ENCODE measurements at regions of chr12 and their contacts with region 1.

Region 1: DNA sequence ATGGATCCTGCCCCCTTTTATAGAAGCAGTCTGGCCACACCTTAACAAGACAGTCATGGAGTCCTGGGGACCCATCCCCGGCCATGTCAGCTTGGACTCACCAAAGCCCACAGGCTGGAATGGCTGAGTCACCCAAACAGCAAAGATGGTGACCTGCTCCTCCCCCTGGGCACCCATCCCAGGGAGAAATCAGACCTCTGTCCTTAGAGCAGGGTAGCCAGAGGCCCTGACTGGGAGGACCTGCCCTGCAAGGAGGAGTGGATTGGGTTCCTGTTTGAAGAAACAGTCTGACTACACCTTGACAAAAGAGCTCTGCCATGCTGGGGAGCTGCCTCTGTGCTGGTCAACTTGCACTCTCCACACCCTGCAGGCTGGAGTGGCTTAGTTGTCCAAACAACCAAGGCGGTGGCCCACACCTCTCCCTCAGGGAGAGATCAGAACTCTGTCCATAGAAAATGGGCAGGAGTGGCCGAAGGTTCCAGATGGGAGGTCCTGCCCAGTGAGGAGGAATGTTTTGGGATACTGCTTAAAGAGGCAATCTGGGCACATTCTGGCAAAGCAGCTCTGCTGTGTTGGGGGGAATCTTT is 16.6 kb downstream of the MGP start:
- DNase-seq: no peak
- ATAC-seq: no peak
- H3K4me3 ChIP-seq: no peak overlapping the region
- H3K4me3 Mint-ChIP-seq: no peak overlapping the region
- H3K27ac ChIP-seq: no peak overlapping the region
- H3K27ac Mint-ChIP-seq: no peak overlapping the region
- H3K4me1 ChIP-seq: no peaks in the 10 kb centered on the region
- H3K4me1 Mint-ChIP-seq: no peaks in the 10 kb centered on the region
- H3K27me3 ChIP-seq: peaks cover 0 to 2% of the 10 kb centered on the region in 2 experiments
- H3K27me3 Mint-ChIP-seq: no peaks in the 10 kb centered on the region
- CTCF ChIP-seq: no peak

Region 2: GRCh38 chr12:14850929-14851663 is 17.9 kb before region 1 on chr12:
- CTCF ChIA-PET with region 1: no interaction called
- POLR2A ChIA-PET with region 1: no interaction called
- intact Hi-C with region 1: loop called in 1 of 2 experiments (anchors 1 kb)
- DNase-seq: no peak
- ATAC-seq: no peak
- H3K4me3 ChIP-seq: no peak overlapping the region
- H3K4me3 Mint-ChIP-seq: no peak overlapping the region
- H3K27ac ChIP-seq: no peak overlapping the region
- H3K27ac Mint-ChIP-seq: no peak overlapping the region
- H3K4me1 ChIP-seq: no peaks in the 10 kb centered on the region
- H3K4me1 Mint-ChIP-seq: peaks cover 4% of the 10 kb centered on the region
- H3K27me3 ChIP-seq: no peaks in the 10 kb centered on the region
- H3K27me3 Mint-ChIP-seq: no peaks in the 10 kb centered on the region
- CTCF ChIP-seq: no peak

Region 3: DNA sequence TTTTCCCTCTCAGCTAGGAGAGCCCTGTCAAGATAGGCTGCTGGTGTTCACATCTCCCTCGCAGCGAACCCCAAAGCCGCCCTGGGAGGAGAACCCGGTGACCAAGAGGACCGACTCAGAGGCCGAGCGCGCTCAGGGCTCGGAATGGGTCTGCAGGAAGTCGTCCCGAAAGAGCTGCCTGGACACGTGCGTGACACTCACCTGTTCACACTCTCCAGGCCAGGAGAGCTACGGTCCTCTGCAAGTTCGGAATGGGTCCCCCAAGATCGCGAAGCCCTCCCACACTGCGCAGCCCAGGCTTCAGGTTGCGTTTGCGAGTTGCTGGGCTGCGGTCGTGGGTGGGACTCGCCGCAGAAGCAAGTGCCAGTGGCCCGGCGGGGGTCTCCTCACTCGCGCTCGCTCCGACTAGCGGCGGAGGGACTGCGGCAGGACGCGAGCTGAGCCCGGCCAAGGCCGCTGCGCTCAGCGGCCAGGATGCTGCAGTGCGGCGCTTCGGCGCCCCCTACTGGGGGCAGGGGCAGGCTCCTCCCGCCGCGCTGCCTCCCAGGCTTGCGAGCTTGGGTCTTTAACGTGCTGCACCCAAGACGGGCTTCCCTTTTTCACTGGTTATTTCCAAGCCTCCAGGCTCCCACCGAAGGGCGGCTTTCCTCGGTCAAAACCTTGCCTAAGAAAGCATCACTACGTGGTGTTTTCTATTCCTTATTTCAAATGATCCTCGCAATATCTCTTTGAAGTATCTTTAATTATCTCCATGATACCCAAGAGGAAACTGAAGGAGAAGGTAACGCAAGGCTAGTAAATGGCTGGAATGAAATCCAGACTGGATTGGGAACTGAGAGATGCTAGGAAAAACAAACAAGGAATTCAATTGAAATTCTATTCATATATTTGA is 352.2 kb after region 1 on chr12 and contains the start of gene RERG:
- CTCF ChIA-PET with region 1: no interaction called
- POLR2A ChIA-PET with region 1: no interaction called
- intact Hi-C with region 1: no loop called
- DNase-seq: peak; percentile 50 to 86 (median 68)
- ATAC-seq: peak; percentile 99
- H3K4me3 ChIP-seq: peak within 1 kb of the TSS; percentile 49
- H3K4me3 Mint-ChIP-seq: peak within 1 kb of the TSS; percentile 71
- H3K27ac ChIP-seq: no peak within 1 kb of the TSS
- H3K27ac Mint-ChIP-seq: no peak within 1 kb of the TSS
- H3K4me1 ChIP-seq: peaks cover 10% of the 10 kb centered on the region
- H3K4me1 Mint-ChIP-seq: peaks cover 13% of the 10 kb centered on the region
- H3K27me3 ChIP-seq: peaks cover 7 to 34% of the 10 kb centered on the region in 2 experiments
- H3K27me3 Mint-ChIP-seq: peaks cover 42% of the 10 kb centered on the region
- CTCF ChIP-seq: peak; percentile 94
- total RNA-seq, gene RERG: not detected

Measured in CD4-positive, alpha-beta T cell (primary cell).